Adrenal gland (tissue), 19 donors: ENCODE measurements at regions of chr3 and their contacts with region 1.

Region 1: GRCh38 chr3:71583566-71584449 is at the start of gene FOXP1:
- DNase-seq: peak; percentile 77 to 94 (median 80)
- H3K4me3 ChIP-seq: peak within 1 kb of the TSS; percentile 75 to 91 (median 78)
- H3K27ac ChIP-seq: peak within 1 kb of the TSS; percentile 62 to 99 (median 94)
- H3K4me1 ChIP-seq: peaks cover 0 to 18% of the 10 kb centered on the region in 2 donors
- H3K27me3 ChIP-seq: no peaks in the 10 kb centered on the region
- CTCF ChIP-seq: peak in 1 of 6 experiments; percentile 6
- POLR2A ChIP-seq: peak; percentile 42 to 71
- total RNA-seq, gene FOXP1: 15.4 to 42.7 (median 30.2) TPM

Region 2: DNA sequence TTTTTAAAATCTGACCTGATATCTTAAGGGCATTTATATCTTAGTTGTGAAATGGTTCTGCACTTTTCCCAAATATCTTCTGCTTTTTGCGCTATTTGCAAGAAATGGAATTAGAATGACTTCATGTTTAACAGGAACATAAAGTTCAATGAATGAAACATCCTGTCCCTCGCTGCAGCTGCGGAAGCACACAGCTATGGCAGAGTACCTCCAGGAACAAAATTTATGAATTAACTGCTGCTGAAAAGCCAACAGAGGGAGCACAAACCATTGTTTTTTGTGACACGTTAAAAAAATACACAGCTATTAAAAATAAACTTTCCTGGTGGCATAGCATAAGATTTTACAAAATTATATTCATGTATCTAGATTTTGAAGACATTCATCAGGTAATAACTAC is 867.0 kb before region 1 on chr3:
- intact Hi-C with region 1: loop called in 1 of 2 experiments (anchors 10 kb)
- DNase-seq: peak in 5 of 7 donors; percentile 8 to 58 (median 21)
- H3K4me3 ChIP-seq: no peak overlapping the region
- H3K27ac ChIP-seq: no peak overlapping the region
- H3K4me1 ChIP-seq: no peaks in the 10 kb centered on the region
- H3K27me3 ChIP-seq: no peaks in the 10 kb centered on the region
- CTCF ChIP-seq: peak; percentile 7 to 61 (median 48)
- POLR2A ChIP-seq: no peak

Region 3: GRCh38 chr3:71006810-71007785 is 576.7 kb before region 1 on chr3:
- intact Hi-C with region 1: loop called in 1 of 2 experiments (anchors 10 kb)
- DNase-seq: no peak
- H3K4me3 ChIP-seq: no peak overlapping the region
- H3K27ac ChIP-seq: no peak overlapping the region
- H3K4me1 ChIP-seq: peaks cover 0 to 7% of the 10 kb centered on the region in 2 donors
- H3K27me3 ChIP-seq: no peaks in the 10 kb centered on the region
- CTCF ChIP-seq: peak in 5 of 6 experiments; percentile 26 to 49 (median 42)
- POLR2A ChIP-seq: no peak

Region 4: DNA sequence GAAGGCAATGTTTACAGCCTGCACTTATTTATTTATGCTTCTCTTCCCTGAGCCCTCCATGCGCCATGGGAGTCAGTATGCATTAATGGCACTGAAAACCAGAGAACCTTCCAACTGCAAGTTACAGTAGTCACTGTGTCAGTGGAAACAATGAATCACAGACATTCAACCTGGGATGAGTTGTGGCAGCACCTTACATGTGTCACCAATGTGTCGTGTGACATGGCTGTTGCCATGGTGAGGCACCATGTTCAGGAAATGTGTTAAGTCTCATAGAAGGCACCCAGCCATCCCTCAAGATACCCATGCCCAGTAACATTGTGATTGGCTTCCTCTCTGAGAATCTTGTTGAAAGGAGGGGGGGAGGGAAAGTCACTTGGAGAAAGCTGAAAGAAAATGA is 105.2 kb before region 1 on chr3:
- intact Hi-C with region 1: no loop called
- DNase-seq: peak in 3 of 7 donors; percentile 12 to 44 (median 26)
- H3K4me3 ChIP-seq: no peak overlapping the region
- H3K27ac ChIP-seq: no peak overlapping the region
- H3K4me1 ChIP-seq: peaks cover 0 to 11% of the 10 kb centered on the region in 2 donors
- H3K27me3 ChIP-seq: no peaks in the 10 kb centered on the region
- CTCF ChIP-seq: no peak
- POLR2A ChIP-seq: no peak